Cardiac septum (tissue), 1 donor: ENCODE measurements at regions of chr4 and their contacts with region 1.

Region 1: DNA sequence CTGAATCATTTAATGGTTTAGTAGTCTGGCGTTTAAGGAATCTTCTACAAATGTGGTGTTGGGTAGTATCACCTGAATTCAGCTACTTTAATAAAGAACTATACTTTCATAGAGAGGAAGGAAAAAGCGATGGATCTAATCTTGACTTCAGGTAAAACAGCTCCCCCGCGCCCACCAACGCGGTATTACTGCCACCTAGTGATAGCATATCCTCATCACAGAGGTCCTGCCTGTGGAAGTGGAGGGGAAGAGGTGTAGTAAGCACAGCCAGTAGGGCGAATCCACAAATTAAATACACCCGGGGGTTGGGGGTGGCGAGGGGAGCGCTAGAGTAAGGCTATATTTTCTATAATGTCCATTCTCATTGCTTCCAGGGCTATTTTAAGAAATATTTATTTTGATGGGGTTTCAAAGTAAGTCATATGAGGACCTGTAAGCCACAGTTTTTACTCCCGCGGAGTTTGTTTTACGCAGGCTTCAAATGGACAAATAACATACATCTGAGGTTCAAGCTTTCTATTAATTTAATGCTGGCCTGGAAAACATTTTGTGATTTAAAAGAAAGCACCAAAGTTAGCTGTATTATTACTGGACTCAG is 8.3 kb upstream of the DAPP1 start:
- DNase-seq: peak; percentile 78

Region 2: GRCh38 chr4:99642725-99643489 is 165.5 kb before region 1 on chr4:
- intact Hi-C with region 1: loop called (anchors 10 kb)
- DNase-seq: no peak

Region 3: GRCh38 chr4:99755223-99755944 is 53.0 kb before region 1 on chr4:
- intact Hi-C with region 1: no loop called
- DNase-seq: no peak

Region 4: DNA sequence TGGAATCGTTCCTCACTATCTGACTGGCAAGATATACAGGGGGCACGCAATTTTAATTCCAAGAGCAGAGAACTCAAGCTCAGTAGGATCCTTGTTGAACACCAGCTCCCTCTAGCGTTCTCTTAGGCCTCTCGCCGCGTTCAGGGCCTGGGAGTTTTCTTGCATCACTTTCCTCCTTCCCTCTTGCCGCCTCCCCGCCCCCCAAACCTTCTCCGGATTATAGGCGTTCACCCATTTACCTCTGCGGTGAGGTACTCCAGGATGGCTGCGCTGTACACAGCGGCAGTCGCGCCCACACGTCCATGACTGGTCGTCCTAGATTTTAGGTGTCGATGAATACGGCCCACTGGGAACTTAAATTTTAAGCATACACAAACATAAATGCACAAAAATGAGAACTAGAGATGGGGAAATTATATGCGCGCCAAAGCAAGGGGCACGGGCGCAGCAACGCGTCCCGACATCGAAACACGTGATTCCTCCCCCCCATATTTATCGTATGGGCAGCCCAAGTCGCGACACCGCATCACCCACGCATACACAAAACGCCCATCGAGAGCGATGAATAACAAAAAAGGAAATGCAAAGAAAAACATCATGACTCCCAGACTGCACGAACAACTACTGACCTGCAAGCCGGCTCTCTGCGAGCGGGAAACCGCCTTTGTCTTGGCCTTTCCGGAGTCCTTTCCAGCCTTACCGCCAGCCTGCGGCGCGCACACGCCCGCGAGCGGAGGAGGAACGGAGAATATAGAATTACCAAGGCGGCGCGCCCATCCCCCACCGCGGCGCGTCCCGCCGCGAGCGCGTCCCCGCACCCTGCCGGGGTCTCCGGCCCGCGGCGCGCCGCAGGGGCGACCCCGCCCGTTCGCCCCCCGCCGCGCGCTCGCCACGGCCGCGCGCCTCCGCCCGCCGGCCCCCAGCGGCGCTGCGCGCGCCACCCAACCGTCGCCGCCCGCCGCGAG is 141.0 kb after region 1 on chr4:
- intact Hi-C with region 1: loop called (anchors 5 kb)
- DNase-seq: peak; percentile 94

Region 5: GRCh38 chr4:100017637-100018310 is 209.4 kb after region 1 on chr4:
- intact Hi-C with region 1: no loop called
- DNase-seq: no peak